Esophagus muscularis mucosa (tissue), 4 donors: ENCODE measurements at regions of chr18 and their contacts with region 1.

Region 1: GRCh38 chr18:12768625-12769024 is 65.8 kb downstream of the PSMG2 start:
- DNase-seq: no peak
- H3K4me3 ChIP-seq: no peak overlapping the region
- H3K27ac ChIP-seq: no peak overlapping the region
- H3K4me1 ChIP-seq: no peaks in the 10 kb centered on the region
- H3K27me3 ChIP-seq: peaks cover 0 to 3% (median 0%) of the 10 kb centered on the region in 4 donors
- CTCF ChIP-seq: no peak
- EP300 ChIP-seq: no peak
- POLR2A ChIP-seq: no peak

Region 2: GRCh38 chr18:12574494-12575185 is 194.0 kb before region 1 on chr18:
- intact Hi-C with region 1: no loop called
- DNase-seq: no peak
- H3K4me3 ChIP-seq: no peak overlapping the region
- H3K27ac ChIP-seq: no peak overlapping the region
- H3K4me1 ChIP-seq: no peaks in the 10 kb centered on the region
- H3K27me3 ChIP-seq: no peaks in the 10 kb centered on the region
- CTCF ChIP-seq: no peak
- EP300 ChIP-seq: no peak
- POLR2A ChIP-seq: no peak

Region 3: DNA sequence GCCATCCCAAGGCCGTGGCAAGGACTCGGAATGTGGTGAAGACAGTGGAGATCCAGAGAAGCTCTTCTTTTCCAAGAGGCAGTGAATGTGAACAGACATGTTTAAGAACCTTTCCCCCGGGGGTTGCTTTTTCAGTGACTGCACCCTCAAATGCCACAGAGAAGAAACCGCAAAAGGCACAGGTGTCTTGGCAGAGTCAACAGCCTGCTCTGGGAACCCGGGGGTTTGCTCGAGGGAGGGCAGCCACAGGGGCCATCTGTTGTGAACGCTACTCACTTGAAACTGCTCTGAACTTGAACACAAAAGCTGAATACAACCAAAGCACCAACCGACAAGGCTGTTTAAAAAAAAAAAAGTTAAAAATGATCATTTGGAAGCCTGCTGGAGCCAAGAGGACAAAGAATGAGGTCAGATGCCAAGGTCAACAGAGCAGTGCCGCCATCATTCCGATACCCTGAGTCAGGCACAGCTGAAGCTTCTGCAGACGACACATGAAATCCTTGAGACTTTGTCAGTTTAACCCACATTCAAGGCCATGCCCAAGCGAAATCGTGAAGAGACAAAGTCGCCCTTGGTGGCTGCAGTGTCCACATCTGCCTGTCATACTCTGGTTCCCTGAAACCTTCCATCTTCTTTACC is 18.4 kb before region 1 on chr18:
- intact Hi-C with region 1: loop called (anchors 1 kb)
- DNase-seq: no peak
- H3K4me3 ChIP-seq: no peak overlapping the region
- H3K27ac ChIP-seq: no peak overlapping the region
- H3K4me1 ChIP-seq: no peaks in the 10 kb centered on the region
- H3K27me3 ChIP-seq: no peaks in the 10 kb centered on the region
- CTCF ChIP-seq: no peak
- EP300 ChIP-seq: no peak
- POLR2A ChIP-seq: no peak

Region 4: DNA sequence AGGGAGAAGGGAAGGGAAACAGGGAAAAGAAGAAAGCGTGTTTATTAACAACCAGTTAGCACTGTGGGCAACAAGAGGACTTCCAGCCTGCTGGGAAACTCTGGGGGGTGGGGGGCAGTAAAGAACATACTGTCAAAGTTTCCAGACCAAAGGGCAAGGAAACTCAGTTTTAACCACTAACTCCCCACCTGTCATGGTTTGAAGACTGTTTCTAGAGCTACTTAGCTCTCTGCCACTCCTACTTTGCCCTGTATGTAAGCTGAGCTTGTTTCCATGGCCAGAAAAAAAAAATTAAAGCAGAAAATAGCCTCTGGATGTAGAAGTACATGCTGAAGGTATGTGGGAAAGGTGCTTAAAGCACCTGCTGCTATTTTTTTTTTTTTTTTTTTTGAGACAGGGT is 126.4 kb after region 1 on chr18:
- intact Hi-C with region 1: no loop called
- DNase-seq: no peak
- H3K4me3 ChIP-seq: no peak overlapping the region
- H3K27ac ChIP-seq: no peak overlapping the region
- H3K4me1 ChIP-seq: peaks cover 0 to 6% (median 0%) of the 10 kb centered on the region in 4 donors
- H3K27me3 ChIP-seq: peaks cover 0 to 27% (median 0%) of the 10 kb centered on the region in 4 donors
- CTCF ChIP-seq: no peak
- EP300 ChIP-seq: no peak
- POLR2A ChIP-seq: no peak